A673 (cell line): ENCODE measurements at regions of chr12 and their contacts with region 1.

Region 1: DNA sequence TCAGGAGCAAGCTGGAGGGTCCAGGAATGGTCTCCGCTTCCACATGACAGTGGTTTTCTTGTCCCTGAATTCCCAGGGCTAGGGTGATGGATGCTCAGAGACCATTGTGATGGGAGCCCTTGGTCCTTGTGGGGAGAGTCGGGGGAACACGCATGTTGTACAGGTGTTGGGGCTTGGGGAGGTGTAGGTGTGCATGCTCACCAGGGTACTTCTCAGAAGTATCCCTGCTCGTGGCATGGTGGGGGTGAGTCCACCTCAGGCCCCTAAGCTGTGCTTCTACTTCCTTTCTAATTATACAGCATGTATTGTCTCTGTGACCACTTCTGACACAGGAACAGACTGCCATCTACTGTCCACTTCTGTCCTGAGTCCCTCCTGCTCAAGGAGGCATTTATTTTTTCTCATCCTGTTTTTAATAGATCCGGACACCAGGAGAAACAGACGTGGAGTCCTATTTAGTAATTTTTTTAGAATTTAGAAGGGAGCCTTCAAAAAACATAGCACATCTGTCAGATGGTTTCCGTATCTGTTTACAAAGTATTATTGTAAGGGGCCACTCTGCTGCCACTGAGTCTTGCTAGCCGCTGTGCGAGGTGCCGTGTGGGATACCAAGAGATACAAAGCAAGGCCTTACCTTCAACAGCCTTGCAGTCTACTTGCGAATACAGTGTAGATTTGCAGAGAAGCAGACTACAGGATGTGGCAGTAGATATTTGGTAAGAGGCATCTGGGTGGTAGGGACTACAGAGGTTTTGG is 10.5 kb downstream of the NTF3 start:
- DNase-seq: peak; percentile 32
- H3K4me3 ChIP-seq: no peak overlapping the region
- H3K27ac ChIP-seq: no peak overlapping the region
- H3K4me1 ChIP-seq: no peaks in the 10 kb centered on the region
- H3K27me3 ChIP-seq: peaks cover 60% of the 10 kb centered on the region
- CTCF ChIP-seq: peak; percentile 54

Region 2: DNA sequence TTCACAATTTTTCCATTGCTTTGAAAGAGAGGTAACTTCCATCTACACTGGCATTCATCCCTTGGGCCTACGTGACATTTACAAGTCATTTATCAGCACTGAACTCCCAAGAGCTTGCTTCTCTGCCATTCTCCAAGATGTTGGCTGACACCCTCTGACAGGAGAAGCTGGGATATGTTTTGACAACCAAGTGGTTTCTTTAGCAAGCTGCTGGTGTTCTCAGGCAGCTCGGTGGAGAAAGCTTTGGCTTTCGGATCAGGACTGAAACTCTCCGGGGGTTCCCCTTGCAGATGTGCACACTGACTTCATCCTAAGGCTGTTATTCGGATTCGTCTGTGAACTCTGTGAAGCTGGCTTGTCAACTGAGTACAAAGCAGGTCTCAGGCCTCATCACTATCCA is 383.1 kb before region 1 on chr12:
- CTCF ChIA-PET with region 1: no interaction called
- POLR2A ChIA-PET with region 1: no interaction called
- intact Hi-C with region 1: no loop called
- DNase-seq: no peak
- H3K4me3 ChIP-seq: no peak overlapping the region
- H3K27ac ChIP-seq: no peak overlapping the region
- H3K4me1 ChIP-seq: no peaks in the 10 kb centered on the region
- H3K27me3 ChIP-seq: peaks cover 36% of the 10 kb centered on the region
- CTCF ChIP-seq: no peak

Region 3: DNA sequence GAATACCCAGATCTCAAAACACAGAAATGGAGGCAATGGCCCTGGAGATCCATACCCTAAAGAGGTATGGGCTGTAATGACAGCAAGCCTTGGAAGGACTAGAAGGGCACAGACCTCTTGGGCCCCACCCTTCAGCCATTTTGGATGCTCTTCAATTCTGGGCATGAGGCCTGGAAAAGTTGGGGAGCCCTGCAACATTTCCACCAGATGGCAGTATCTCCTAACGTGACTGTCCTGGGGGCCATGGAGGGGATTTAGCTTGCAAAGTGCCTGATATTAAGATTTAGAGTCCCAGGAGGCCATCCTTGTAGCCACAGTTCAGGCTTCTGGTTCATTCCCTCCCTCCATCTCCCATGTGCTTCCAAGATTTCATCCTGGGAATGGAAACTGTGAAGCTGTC is 368.6 kb before region 1 on chr12:
- CTCF ChIA-PET with region 1: no interaction called
- POLR2A ChIA-PET with region 1: no interaction called
- intact Hi-C with region 1: loop called (anchors 5 kb)
- DNase-seq: peak; percentile 25
- H3K4me3 ChIP-seq: no peak overlapping the region
- H3K27ac ChIP-seq: no peak overlapping the region
- H3K4me1 ChIP-seq: no peaks in the 10 kb centered on the region
- H3K27me3 ChIP-seq: peaks cover 25% of the 10 kb centered on the region
- CTCF ChIP-seq: peak; percentile 47

Region 4: GRCh38 chr12:5171701-5172100 is 270.7 kb before region 1 on chr12:
- CTCF ChIA-PET with region 1: interaction called, 3 read pairs
- POLR2A ChIA-PET with region 1: no interaction called
- intact Hi-C with region 1: loop called (anchors 2 kb)
- DNase-seq: peak; percentile 37
- H3K4me3 ChIP-seq: no peak overlapping the region
- H3K27ac ChIP-seq: no peak overlapping the region
- H3K4me1 ChIP-seq: no peaks in the 10 kb centered on the region
- H3K27me3 ChIP-seq: peaks cover 18% of the 10 kb centered on the region
- CTCF ChIP-seq: peak; percentile 69

Region 5: GRCh38 chr12:5200278-5201087 is 241.9 kb before region 1 on chr12:
- CTCF ChIA-PET with region 1: interaction called, 3 read pairs
- POLR2A ChIA-PET with region 1: no interaction called
- intact Hi-C with region 1: loop called (anchors 1 kb)
- DNase-seq: peak; percentile 52
- H3K4me3 ChIP-seq: no peak overlapping the region
- H3K27ac ChIP-seq: no peak overlapping the region
- H3K4me1 ChIP-seq: no peaks in the 10 kb centered on the region
- H3K27me3 ChIP-seq: no peaks in the 10 kb centered on the region
- CTCF ChIP-seq: peak; percentile 79

Region 6: GRCh38 chr12:5466521-5466960 is 24.1 kb after region 1 on chr12:
- CTCF ChIA-PET with region 1: no interaction called
- POLR2A ChIA-PET with region 1: no interaction called
- intact Hi-C with region 1: no loop called
- DNase-seq: no peak
- H3K4me3 ChIP-seq: no peak overlapping the region
- H3K27ac ChIP-seq: no peak overlapping the region
- H3K4me1 ChIP-seq: no peaks in the 10 kb centered on the region
- H3K27me3 ChIP-seq: peaks cover 53% of the 10 kb centered on the region
- CTCF ChIP-seq: no peak